GM10248 (cell line): ENCODE measurements at regions of chr3 and their contacts with region 1.

Region 1: DNA sequence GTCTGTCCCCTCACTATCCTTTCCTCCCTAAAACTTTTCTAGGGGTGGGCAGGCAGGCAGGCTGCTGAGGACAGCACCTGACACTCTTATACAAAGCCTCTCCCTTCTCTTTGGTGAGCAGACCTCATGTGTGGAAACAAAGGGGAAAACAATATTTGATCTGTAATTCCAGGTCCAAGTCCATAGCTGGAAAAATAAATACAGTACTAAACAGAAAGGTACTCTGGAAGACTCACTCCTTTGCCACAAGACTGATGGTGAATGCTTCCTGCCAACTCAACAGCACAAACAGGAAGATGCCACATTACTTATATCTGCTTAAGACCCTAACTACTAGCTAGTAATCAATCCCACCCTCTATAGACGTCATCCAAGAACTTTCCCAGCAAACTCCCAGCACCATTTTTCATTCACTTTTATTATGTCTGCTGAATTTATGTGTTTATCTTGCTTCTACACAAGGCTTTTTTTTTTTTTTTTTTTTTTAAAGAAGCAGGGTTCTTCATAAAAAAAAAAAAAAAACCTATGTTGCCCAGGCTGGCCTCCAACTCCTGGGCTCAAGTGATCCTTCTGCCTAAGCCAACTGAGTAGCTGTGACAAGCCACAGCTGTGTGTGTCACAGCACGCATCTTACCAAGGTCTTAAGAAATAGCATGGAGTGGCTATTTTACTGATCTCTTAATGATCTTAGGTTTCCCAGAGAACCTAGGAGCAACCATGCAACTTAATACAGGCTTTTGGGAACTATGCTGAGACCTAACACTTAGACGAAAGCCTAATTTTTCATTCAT is 44.2 kb upstream of the CSPG5 start:
- DNase-seq: no peak
- CTCF ChIP-seq: no peak

Region 2: GRCh38 chr3:47634996-47635395 is 12.1 kb after region 1 on chr3:
- CTCF ChIA-PET with region 1: interaction called, 7 read pairs
- POLR2A ChIA-PET with region 1: interaction called, 10 read pairs
- DNase-seq: no peak
- CTCF ChIP-seq: no peak